Posterior cingulate gyrus (tissue), 11 donors: ENCODE measurements at regions of chr3 and their contacts with region 1.

Region 1: GRCh38 chr3:13648060-13649001 is 99.4 kb downstream of the FBLN2 start:
- DNase-seq: peak; percentile 80 to 98 (median 90)

Region 2: DNA sequence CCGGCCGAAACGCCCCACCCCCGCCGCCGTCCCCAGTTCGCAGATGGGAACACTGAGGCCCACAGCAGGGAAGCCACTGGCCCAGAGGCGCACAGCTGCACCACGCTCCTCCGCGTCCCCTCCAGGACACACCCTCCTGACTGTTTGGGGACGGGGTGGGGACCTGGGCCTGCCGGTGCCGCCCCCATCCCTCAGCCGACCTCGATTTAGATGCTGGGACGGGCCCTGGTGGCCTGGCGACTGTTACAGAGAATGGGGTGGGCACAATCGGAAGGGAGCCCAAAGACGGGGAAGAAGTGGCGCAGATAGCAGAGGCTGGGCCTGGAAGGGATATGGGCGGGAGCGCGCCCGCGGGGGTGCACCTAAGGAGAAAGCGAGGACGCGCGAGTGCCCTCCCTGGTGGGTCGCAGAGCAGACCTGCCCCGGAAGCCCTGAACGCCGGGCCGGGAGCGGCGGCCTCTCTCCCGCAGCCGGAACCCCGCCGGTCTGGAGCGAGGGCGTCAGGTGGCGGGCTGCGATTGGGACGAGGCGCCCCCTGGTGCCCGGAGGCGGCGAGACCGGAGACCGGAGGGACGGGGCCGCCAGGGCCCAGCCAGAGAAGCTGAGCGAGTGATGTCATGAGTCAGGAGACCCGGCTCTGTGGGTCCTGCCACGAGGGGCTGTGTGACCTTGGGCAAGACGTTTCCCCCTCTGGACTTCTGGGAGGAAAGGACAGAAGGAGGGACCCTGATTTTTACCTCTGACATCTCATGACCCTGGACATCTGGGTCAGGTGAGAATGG is 653.5 kb before region 1 on chr3:
- intact Hi-C with region 1: loop called (anchors 10 kb)
- DNase-seq: peak; percentile 75 to 98 (median 86)

Region 3: DNA sequence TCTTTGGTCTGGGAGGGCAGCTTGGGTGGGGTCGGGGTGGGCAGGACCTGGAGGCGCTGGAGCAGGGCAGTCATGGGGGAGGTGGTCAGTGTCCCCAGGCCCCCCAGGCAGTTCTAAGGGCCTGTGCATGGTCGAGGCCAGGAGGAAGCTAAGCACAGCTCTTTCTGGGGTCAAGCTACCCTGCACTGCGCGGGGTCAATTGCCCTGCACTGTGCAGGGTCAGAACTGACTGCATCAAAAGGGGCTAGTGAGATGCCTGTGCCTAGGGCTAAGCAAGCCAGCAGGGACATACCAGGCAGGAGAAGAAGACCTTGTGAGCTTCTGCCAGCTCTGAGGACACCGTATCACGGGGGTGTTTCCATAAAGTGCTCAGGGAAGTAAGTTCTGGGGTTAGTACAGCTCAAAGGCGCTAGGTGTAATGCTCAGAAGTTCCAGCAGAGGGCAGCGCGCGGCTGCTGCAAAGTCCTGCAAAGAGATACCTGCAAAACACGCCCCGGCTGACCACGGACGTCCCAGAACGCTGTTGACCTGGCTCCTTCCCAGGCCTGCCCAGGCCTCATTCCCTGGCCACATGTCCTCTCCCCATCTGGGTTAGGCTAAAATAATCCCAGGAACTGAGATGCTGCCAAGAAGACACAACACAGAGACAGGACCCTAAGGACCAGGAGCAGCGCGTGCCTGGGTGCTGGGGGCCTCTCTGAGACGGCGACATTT is 556.3 kb before region 1 on chr3:
- intact Hi-C with region 1: loop called (anchors 1 kb)
- DNase-seq: peak; percentile 69 to 97 (median 88)

Region 4: DNA sequence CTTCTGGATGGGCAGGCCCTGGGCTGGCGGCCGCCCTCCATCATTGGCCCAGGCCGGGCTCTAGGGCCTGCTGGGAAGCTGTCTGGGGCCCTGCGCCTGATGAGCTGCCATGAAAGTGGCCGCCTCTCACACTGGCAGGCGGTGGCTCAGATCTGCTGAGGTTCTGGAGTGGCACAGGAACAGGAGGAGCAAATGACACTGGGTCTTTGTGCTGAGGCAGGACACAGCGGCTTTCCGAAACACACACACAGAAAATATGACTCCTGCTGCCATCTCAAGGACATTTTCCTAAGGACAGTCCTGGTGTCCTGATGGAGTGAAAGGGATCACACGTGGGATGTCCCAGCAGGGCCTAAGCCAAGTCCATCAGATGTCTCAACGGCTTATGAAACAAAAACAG is 331.7 kb before region 1 on chr3:
- intact Hi-C with region 1: loop called (anchors 10 kb)
- DNase-seq: peak in 5 of 10 donors; percentile 21 to 85 (median 55)

Region 5: DNA sequence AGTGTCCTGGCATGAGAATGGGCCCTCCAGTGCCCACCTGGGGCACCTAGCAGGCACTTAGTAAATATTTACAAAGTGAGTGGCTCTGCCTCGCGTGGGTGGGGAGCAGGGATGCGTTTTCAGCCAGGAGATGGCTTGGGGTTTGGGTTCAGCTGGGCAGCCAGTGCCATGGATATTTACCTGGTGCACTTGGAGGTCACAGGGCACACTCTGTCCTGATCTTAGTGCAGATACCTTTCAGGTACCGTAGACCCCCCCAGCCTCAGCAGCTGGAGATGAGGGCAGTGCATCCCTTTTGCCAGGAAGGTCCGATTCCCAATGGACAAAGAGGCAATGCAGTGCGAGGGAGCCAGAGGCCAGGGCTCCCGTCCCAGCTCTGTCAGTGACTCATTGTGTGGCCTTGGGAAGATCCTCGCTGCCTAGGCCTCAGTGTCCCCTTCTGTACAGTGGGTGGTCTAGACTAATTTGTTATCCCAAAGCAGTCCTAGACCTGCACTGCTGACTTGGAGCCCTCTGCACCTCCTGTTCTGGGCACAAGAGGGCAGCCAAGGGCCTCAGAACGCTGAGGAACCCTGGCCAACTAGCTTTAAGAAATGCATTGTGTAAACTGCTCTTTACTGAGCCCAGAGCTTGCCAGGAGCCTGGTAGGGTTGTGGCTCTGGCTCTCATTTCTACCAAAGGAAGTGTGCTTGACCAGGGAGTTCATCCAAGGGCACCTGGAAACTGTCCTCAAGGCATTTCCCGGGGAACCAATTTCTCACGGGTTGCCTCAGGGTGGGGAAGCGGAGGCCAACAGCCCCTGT is 152.2 kb before region 1 on chr3:
- intact Hi-C with region 1: loop called (anchors 1 kb)
- DNase-seq: peak; percentile 79 to 97 (median 84)

Region 6: DNA sequence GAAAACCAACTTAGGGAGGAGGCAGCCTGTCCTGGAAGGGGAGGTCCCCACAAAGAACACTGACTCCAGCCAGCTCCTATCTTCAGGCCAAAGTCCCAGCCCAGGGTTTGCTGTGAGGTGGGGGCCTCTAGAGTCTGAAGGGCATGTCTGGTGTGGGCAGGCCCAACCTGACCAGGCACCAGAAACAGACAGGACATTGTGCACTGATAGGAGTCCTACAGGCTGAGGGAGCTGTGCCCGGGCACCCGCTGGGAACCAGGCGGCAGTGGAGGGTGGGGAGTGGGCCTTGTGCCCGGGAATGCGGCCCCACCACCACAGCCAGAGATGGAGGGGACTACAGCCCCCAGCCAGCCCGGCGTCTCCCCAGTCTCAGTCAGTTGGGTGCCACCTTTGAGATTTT is 70.1 kb after region 1 on chr3:
- intact Hi-C with region 1: no loop called
- DNase-seq: peak in 1 of 10 donors; percentile 57

Region 7: GRCh38 chr3:14113965-14114635 is 465.8 kb after region 1 on chr3:
- intact Hi-C with region 1: loop called (anchors 10 kb)
- DNase-seq: no peak